BJ (cell line): ENCODE measurements at regions of chr12 and their contacts with region 1.

Region 1: GRCh38 chr12:65536876-65537661 is 258.6 kb downstream of the MSRB3 start:
- DNase-seq: peak; percentile 100
- H3K4me3 ChIP-seq: no peak overlapping the region
- H3K27me3 ChIP-seq: no peaks in the 10 kb centered on the region
- CTCF ChIP-seq: no peak

Region 2: DNA sequence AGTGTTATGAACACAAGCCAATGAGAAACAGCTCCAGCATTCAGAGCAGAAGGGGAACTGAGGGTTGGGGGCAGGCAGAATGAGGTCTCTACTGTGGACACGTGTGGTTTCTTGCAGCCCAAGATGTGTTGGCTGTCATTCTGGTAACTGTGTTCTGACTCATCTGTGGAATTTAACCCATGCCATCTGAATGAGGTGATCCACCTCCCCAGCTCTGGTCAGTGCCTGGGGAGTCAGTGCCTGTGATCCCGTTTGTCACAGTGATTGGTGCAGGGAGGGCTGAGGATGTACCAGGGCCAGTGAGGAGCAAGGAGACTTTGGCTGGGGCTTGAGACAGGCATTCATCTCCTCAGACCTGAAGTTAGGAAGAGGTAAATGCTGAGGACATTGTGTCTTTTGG is 41.8 kb before region 1 on chr12:
- CTCF ChIA-PET with region 1: no interaction called
- POLR2A ChIA-PET with region 1: no interaction called
- DNase-seq: no peak
- H3K4me3 ChIP-seq: no peak overlapping the region
- H3K27me3 ChIP-seq: no peaks in the 10 kb centered on the region
- CTCF ChIP-seq: no peak

Region 3: DNA sequence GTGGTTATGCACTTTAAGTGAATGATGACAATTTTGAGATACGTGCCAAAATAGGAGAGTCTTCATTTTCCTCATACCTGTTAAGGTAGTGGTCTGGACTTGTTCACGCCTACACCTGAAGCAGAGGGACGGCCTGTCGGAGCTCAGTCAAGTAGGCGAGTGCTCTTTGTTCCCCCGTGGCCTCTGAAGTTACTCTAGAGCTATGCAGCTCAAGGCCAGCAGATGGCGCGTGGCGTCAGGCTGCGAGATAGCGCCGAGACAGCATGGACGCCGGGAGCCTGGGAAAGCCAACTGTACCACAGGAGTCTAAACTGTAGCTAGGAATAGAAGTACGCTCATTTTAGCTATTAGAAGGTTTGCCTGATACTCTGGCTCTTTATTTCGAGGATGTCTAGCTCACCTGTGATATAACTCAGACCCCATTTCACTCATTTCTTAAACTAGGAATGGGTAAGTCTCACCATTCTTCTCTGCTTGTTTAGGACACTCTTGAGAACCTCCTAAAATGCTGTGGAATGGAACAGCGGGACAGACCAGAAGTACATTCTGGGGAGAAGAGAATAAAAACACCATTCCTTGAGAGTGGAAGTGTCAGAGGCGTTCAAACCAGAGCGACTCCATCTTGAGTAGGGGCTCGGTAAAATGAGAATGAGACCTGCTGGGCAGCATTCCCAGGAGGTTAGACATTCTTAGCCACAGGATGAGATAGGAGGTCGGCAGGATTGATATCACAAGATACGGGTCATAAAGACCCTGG is 19.8 kb after region 1 on chr12:
- CTCF ChIA-PET with region 1: interaction called, 10 read pairs
- POLR2A ChIA-PET with region 1: no interaction called
- DNase-seq: no peak
- H3K4me3 ChIP-seq: no peak overlapping the region
- H3K27me3 ChIP-seq: no peaks in the 10 kb centered on the region
- CTCF ChIP-seq: peak; percentile 95

Region 4: GRCh38 chr12:65565601-65566560 is 28.8 kb after region 1 on chr12:
- CTCF ChIA-PET with region 1: interaction called, 7 read pairs
- POLR2A ChIA-PET with region 1: interaction called, 11 read pairs
- DNase-seq: peak; percentile 98
- H3K4me3 ChIP-seq: peak overlapping the region; percentile 5; the same call in 1 of the 2 replicates
- H3K27me3 ChIP-seq: no peaks in the 10 kb centered on the region
- CTCF ChIP-seq: peak; percentile 23; the same call in 1 of the 2 replicates